Natural killer cell (primary cell): ENCODE measurements at regions of chr1 and their contacts with region 1.

Region 1: DNA sequence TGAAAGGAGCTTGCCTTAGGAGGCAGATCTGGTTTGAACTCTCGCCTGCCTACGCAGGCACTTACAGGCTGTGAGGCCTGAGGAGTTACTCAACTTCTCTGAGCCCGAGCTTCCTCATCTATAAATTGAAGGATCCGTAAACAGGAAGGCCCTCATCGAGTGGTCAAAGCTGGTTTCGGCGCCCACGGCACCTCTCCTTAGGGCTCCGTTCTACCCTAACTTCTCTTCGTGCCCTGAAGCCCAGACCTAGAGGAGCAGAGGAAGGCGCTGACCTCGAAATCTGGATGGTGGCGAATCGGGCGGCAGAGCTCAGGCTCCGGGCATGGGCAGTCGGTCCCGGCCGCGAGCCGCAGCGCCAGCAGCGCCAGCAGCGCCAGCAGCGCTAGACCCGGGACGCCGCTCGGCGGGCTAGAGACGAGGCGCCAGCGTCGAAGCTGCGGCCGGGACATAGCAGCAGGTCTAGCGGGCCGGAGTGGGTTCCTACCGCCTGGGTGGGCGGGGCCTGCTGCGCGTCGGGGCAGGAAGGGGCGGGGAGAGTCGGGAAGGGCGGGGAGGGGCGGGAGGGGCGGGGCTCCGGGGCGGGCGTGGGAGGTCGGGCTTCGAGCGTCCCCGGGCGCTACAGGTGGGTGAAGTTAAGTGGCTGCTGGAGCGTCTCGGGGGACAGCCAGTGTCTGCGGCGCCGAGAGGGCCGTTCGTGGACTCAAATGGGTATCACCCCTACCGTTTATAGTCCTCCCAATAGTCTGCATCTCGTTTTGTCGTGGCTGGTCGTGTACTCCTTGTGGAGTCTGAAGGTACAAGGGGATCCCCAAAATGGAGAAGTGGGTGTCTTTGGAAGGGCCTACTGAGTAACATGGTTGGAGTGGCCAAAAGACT is at the start of gene CTBS:
- DNase-seq: peak; percentile 80 to 94
- ATAC-seq: peak; percentile 95 to 99 (median 97)
- H3K4me3 ChIP-seq: peak within 1 kb of the TSS; percentile 72
- H3K4me3 Mint-ChIP-seq: peak within 1 kb of the TSS; percentile 93
- H3K27ac ChIP-seq: peak within 1 kb of the TSS; percentile 93
- H3K27ac Mint-ChIP-seq: peak within 1 kb of the TSS; percentile 98 to 99
- H3K4me1 ChIP-seq: peaks cover 16% of the 10 kb centered on the region
- H3K4me1 Mint-ChIP-seq: peaks cover 41 to 44% of the 10 kb centered on the region in 2 donors
- H3K27me3 ChIP-seq: no peaks in the 10 kb centered on the region
- H3K27me3 Mint-ChIP-seq: no peaks in the 10 kb centered on the region
- CTCF ChIP-seq: no peak
- total RNA-seq, gene CTBS: 14.4 to 19.9 (median 17.1) TPM

Region 2: GRCh38 chr1:84478876-84479868 is 95.0 kb before region 1 on chr1 and contains the start of gene RPF1:
- intact Hi-C with region 1: loop called (anchors 1 kb)
- DNase-seq: peak; percentile 70 to 88
- ATAC-seq: peak; percentile 94 to 96 (median 95)
- H3K4me3 ChIP-seq: peak within 1 kb of the TSS; percentile 71
- H3K4me3 Mint-ChIP-seq: peak within 1 kb of the TSS; percentile 100
- H3K27ac ChIP-seq: peak within 1 kb of the TSS; percentile 79
- H3K27ac Mint-ChIP-seq: peak within 1 kb of the TSS; percentile 99 to 100
- H3K4me1 ChIP-seq: peaks cover 13% of the 10 kb centered on the region
- H3K4me1 Mint-ChIP-seq: peaks cover 44 to 46% of the 10 kb centered on the region in 2 donors
- H3K27me3 ChIP-seq: peaks cover 5% of the 10 kb centered on the region
- H3K27me3 Mint-ChIP-seq: peaks cover 24 to 40% of the 10 kb centered on the region in 2 donors
- CTCF ChIP-seq: no peak
- total RNA-seq, gene RPF1: 50.0 to 53.0 (median 50.0) TPM

Region 3: DNA sequence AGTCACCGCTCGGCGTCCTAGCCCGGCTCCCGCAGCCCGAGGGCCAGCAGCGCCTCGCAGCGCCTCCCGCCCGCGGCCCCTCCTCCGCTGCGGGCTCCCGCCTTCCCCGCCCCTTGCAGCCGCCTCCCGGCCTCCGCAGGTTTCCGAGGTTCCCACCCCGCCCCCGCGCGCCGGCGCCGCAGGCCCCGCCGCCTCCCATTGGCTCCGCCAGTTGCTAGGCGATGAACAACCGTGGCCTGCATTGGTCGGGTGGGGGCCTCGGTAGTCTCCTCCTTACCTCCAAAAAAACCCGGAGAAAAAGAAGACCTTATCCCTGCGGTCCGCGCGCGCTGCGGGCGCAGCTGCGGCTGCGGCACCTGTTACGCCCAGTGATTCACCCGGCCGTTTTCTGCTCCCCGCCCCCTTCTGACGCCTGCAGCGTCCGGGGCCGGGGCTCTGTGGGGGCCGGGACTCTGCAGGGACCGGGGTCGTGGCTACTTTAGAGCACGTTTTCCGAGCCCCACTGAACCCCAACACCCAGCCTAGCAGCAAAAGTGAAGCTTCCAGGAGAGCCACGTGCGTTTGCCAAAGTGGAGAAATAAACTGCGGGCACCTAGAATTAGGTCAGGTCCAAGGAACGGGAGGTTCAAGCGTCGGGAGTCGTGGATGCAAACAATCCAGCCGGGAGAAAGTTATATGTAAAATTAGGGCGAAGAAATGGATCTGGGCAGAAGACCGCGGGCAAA is 116.4 kb after region 1 on chr1 and contains the start of gene SSX2IP:
- intact Hi-C with region 1: loop called (anchors 1 kb)
- DNase-seq: peak; percentile 98 to 99
- ATAC-seq: peak; percentile 75 to 94 (median 87)
- H3K4me3 ChIP-seq: peak within 1 kb of the TSS; percentile 60
- H3K4me3 Mint-ChIP-seq: peak within 1 kb of the TSS; percentile 97
- H3K27ac ChIP-seq: peak within 1 kb of the TSS; percentile 85
- H3K27ac Mint-ChIP-seq: peak within 1 kb of the TSS; percentile 99
- H3K4me1 ChIP-seq: peaks cover 23% of the 10 kb centered on the region
- H3K4me1 Mint-ChIP-seq: peaks cover 62 to 67% of the 10 kb centered on the region in 2 donors
- H3K27me3 ChIP-seq: no peaks in the 10 kb centered on the region
- H3K27me3 Mint-ChIP-seq: no peaks in the 10 kb centered on the region
- CTCF ChIP-seq: no peak
- total RNA-seq, gene SSX2IP: 24.2 to 35.8 (median 27.2) TPM